H1 (cell line): ENCODE measurements at regions of chr12 and their contacts with region 1.

Region 1: GRCh38 chr12:69341328-69341727 is 6.9 kb upstream of the LYZ start:
- DNase-seq: no peak
- H3K4me3 ChIP-seq: no peak overlapping the region
- H3K27ac ChIP-seq: no peak overlapping the region
- H3K4me1 ChIP-seq: no peaks in the 10 kb centered on the region
- H3K27me3 ChIP-seq: no peaks in the 10 kb centered on the region
- CTCF ChIP-seq: no peak
- EP300 ChIP-seq: no peak
- POLR2A ChIP-seq: no peak
- RAD21 ChIP-seq: no peak

Region 2: DNA sequence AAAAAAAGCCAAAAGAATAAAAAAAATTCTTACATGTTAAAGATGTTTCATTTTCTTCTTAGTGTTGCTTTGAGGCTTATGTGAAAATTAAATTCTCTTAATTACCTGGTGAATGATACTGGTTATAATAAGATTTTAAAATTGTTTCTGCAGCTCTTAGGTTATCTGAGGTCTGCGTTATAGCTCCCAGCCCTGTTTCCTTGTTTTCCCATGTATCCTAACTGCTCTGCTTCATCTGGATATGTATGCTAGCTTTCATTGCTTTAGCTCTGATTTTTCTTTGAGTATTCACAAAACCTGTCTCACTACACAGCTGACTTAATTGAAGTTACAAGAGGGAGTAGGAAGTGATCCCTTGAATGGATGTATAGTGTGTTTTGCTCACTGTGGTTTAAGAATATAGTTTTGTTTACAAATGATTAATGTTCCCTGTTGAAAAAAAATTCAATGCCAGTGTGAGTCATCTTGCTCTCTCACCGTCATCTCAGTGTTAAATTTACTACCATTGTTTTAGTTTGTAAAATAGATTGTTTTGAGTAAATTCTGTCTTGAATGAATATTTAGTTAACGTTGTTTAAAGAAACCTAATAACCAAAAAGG is 75.2 kb before region 1 on chr12:
- CTCF ChIA-PET with region 1: no interaction called
- POLR2A ChIA-PET with region 1: no interaction called
- DNase-seq: no peak
- H3K4me3 ChIP-seq: no peak overlapping the region
- H3K27ac ChIP-seq: no peak overlapping the region
- H3K4me1 ChIP-seq: no peaks in the 10 kb centered on the region
- H3K27me3 ChIP-seq: no peaks in the 10 kb centered on the region
- CTCF ChIP-seq: no peak
- EP300 ChIP-seq: no peak
- POLR2A ChIP-seq: no peak
- RAD21 ChIP-seq: no peak

Region 3: DNA sequence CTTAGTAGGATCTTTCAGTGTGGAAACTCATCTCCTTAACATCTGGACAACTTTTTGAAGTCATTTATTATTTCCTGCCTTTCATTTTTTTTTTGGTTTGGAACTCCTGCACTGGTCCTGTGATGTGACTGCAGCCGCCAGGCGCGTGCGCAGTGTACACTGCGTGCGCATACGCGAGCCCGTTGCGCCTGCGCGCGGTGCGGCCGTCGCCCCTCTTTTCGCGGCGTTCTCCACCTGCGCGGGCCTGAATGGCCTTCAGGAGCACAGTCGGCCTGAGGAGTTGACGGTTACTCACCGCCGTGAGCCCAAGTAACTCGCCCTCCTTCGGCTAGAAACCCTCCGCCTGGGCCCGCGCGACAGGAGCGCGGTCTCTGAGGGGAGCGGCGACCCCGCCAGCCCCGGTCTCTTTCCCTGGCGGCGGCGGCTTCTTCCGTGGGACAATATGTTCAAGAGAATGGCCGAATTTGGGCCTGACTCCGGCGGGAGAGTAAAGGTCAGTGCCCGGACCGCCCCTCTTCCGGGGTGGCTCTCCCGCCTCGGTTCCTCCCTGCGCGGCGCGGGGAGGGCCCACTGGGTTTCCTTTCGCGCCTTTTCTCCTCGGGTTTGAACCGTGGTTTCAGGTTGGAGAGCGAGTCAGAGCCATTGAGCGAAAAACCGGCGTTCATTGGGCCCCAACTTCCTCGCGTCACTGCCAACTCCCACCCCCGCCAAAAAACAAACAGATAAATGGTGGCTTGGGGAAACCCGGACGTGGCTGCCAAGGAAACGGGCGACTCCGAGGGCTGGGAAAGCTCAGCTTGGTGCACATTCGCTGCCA is 18.4 kb after region 1 on chr12 and contains the start of gene YEATS4:
- CTCF ChIA-PET with region 1: interaction called, 13 read pairs
- POLR2A ChIA-PET with region 1: interaction called, 4 read pairs
- DNase-seq: peak; percentile 65 to 85
- H3K4me3 ChIP-seq: peak within 1 kb of the TSS; percentile 37 to 83 (median 75)
- H3K27ac ChIP-seq: peak within 1 kb of the TSS; percentile 97
- H3K4me1 ChIP-seq: peaks cover 0 to 2% (median under 1%) of the 10 kb centered on the region in 4 experiments; a peak in 5 of 7 replicates
- H3K27me3 ChIP-seq: no peaks in the 10 kb centered on the region
- CTCF ChIP-seq: no peak
- EP300 ChIP-seq: no peak
- POLR2A ChIP-seq: peak; percentile 78 to 91; a peak in 2 of 3 replicates
- RAD21 ChIP-seq: no peak
- total RNA-seq, gene YEATS4: 32.4 and 32.5 TPM in 2 replicates